MCF 10A (cell line): ENCODE measurements at regions of chr3 and their contacts with region 1.

Region 1: GRCh38 chr3:45677033-45677433 is 12.2 kb upstream of the SACM1L start:
- DNase-seq: peak; percentile 92
- H3K4me3 Mint-ChIP-seq: peak overlapping the region; percentile 50
- H3K27ac Mint-ChIP-seq: peak overlapping the region; percentile 83
- H3K4me1 Mint-ChIP-seq: peaks cover 18% of the 10 kb centered on the region
- H3K27me3 Mint-ChIP-seq: no peaks in the 10 kb centered on the region
- CTCF ChIP-seq: no peak

Region 2: DNA sequence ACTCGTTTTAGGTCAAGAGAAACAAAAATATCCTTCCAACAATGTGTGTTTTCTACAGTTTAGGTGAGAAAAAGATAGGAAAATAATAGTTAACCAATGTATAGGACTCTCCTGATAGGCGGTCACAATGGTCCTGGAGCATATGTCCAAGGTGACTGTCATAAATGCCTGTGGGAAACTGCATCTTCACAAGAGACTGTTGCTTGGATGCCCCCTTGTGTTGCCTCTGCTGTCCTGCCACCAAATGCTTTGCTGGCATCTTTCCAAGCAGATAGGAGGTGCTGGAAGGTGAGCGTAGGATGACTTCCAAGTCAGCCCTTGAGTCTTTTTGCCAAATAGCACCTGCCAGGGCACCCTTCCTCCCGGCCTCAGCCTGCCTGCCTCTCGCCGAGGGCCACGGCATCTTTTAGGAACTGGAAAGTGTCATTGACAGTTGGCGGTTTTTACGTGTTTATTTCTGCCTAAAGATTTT is 11.9 kb before region 1 on chr3:
- CTCF ChIA-PET with region 1: interaction called, 16 read pairs
- POLR2A ChIA-PET with region 1: interaction called, 13 read pairs
- intact Hi-C with region 1: no loop called
- DNase-seq: peak; percentile 81
- H3K4me3 Mint-ChIP-seq: no peak overlapping the region
- H3K27ac Mint-ChIP-seq: peak overlapping the region; percentile 50
- H3K4me1 Mint-ChIP-seq: peaks cover 22% of the 10 kb centered on the region
- H3K27me3 Mint-ChIP-seq: no peaks in the 10 kb centered on the region
- CTCF ChIP-seq: peak; percentile 39